PC-3 (cell line): ENCODE measurements at regions of chr3 and their contacts with region 1.

Region 1: GRCh38 chr3:112327371-112327951 is 5.5 kb upstream of the CD200 start:
- DNase-seq: peak; percentile 69
- ATAC-seq: peak; percentile 98
- H3K4me3 ChIP-seq: no peak overlapping the region
- H3K27ac ChIP-seq: no peak overlapping the region
- H3K4me1 ChIP-seq: no peaks in the 10 kb centered on the region
- H3K27me3 ChIP-seq: peaks cover 34% of the 10 kb centered on the region
- CTCF ChIP-seq: peak; percentile 88

Region 2: GRCh38 chr3:112357930-112358780 is 30.7 kb after region 1 on chr3:
- CTCF ChIA-PET with region 1: no interaction called
- POLR2A ChIA-PET with region 1: no interaction called
- intact Hi-C with region 1: no loop called
- DNase-seq: no peak
- ATAC-seq: no peak
- H3K4me3 ChIP-seq: no peak overlapping the region
- H3K27ac ChIP-seq: no peak overlapping the region
- H3K4me1 ChIP-seq: no peaks in the 10 kb centered on the region
- H3K27me3 ChIP-seq: peaks cover 74% of the 10 kb centered on the region
- CTCF ChIP-seq: no peak

Region 3: GRCh38 chr3:112437146-112438022 is 109.9 kb after region 1 on chr3:
- CTCF ChIA-PET with region 1: interaction called, 4 read pairs
- POLR2A ChIA-PET with region 1: no interaction called
- intact Hi-C with region 1: loop called (anchors 1 kb)
- DNase-seq: peak; percentile 75
- ATAC-seq: peak; percentile 98
- H3K4me3 ChIP-seq: no peak overlapping the region
- H3K27ac ChIP-seq: no peak overlapping the region
- H3K4me1 ChIP-seq: no peaks in the 10 kb centered on the region
- H3K27me3 ChIP-seq: peaks cover 46% of the 10 kb centered on the region
- CTCF ChIP-seq: peak; percentile 68

Region 4: DNA sequence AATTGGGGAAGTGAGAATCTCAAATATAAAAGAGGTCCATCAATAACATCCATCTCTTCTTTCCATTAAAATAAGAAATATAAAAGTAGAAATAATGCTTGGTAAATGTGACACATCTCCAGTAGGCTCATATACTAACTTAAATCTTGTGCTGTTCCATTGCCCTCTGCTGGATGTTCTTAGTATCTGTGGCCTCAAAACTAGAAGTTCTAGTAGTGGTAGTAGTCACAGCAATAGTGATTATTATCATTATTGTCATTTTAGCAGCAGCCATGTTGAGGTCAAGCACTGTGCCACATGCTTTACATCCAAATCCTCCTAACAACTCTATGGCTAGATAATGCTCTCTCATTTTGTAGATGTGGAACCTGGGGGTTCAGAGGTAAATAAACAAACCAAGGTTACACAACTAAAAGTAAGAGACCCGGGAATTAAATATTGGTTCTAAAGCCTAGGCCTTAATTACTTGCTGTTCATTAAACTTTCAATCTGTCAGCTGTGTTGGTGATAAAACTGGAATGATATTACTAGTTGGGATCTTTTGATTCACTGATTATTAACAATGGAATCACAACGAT is 192.1 kb after region 1 on chr3:
- CTCF ChIA-PET with region 1: no interaction called
- POLR2A ChIA-PET with region 1: no interaction called
- intact Hi-C with region 1: loop called (anchors 1 kb)
- DNase-seq: peak; percentile 82
- ATAC-seq: peak; percentile 99
- H3K4me3 ChIP-seq: no peak overlapping the region
- H3K27ac ChIP-seq: no peak overlapping the region
- H3K4me1 ChIP-seq: no peaks in the 10 kb centered on the region
- H3K27me3 ChIP-seq: no peaks in the 10 kb centered on the region
- CTCF ChIP-seq: peak; percentile 84

Region 5: DNA sequence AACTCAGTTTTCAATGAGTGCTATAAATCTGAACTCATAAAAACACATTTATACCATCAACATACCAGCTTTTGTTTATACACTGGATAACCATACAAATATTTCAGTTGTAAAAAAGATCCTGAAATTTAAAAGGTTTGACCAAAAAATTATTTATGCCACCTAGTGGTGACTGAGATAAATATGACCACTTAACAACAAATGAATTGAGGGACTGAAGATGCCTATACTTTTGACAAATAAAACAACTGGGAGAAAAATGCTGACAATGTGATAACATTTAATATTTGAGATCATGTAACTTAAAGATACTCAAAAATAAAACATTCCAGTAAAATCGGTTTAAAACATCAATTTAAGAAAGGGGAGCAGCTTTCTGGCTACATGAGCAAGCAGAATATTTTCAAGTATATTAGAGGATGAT is 203.9 kb after region 1 on chr3:
- CTCF ChIA-PET with region 1: interaction called, 4 read pairs
- POLR2A ChIA-PET with region 1: interaction called, 4 read pairs
- intact Hi-C with region 1: loop called (anchors 5 kb)
- DNase-seq: peak; percentile 71
- ATAC-seq: peak; percentile 4; the same call in 1 of the 2 replicates
- H3K4me3 ChIP-seq: no peak overlapping the region
- H3K27ac ChIP-seq: peak overlapping the region; percentile 68; the same call in 1 of the 2 replicates
- H3K4me1 ChIP-seq: peaks cover 20% of the 10 kb centered on the region
- H3K27me3 ChIP-seq: no peaks in the 10 kb centered on the region
- CTCF ChIP-seq: peak; percentile 86